K562 (cell line): ENCODE measurements at regions of chr3 and their contacts with region 1.

Region 1: GRCh38 chr3:170811928-170812591 is 57.9 kb downstream of the RPL22L1 start:
- DNase-seq: peak; percentile 83 to 90 (median 87)
- ATAC-seq: peak; percentile 83
- H3K4me3 ChIP-seq: no peak overlapping the region
- H3K27ac ChIP-seq: no peak overlapping the region
- H3K4me1 ChIP-seq: peaks cover 21 to 48% of the 10 kb centered on the region in 2 experiments
- H3K27me3 ChIP-seq: no peaks in the 10 kb centered on the region
- CTCF ChIP-seq: peak; percentile 91 to 99 (median 98)
- EP300 ChIP-seq: peak; percentile 41; the same call in 1 of the 2 replicates
- POLR2A ChIP-seq: no peak
- RAD21 ChIP-seq: peak; percentile 97 to 98

Region 2: GRCh38 chr3:170180908-170181879 is 630.9 kb before region 1 on chr3 and contains the start of gene PHC3:
- CTCF ChIA-PET with region 1: no interaction called
- POLR2A ChIA-PET with region 1: no interaction called
- in situ Hi-C with region 1: no loop called
- intact Hi-C with region 1: loop called (anchors 10 kb)
- DNase-seq: peak; percentile 96 to 99 (median 98)
- ATAC-seq: peak; percentile 92
- H3K4me3 ChIP-seq: peak within 1 kb of the TSS; percentile 77
- H3K27ac ChIP-seq: peak within 1 kb of the TSS; percentile 91
- H3K4me1 ChIP-seq: peaks cover 4 to 15% of the 10 kb centered on the region in 2 experiments; a peak in 3 of 5 replicates
- H3K27me3 ChIP-seq: no peaks in the 10 kb centered on the region
- CTCF ChIP-seq: no peak
- EP300 ChIP-seq: no peak
- POLR2A ChIP-seq: peak; percentile 94
- RAD21 ChIP-seq: no peak
- polyA plus RNA-seq, gene PHC3: 4.6 to 6.0 TPM

Region 3: DNA sequence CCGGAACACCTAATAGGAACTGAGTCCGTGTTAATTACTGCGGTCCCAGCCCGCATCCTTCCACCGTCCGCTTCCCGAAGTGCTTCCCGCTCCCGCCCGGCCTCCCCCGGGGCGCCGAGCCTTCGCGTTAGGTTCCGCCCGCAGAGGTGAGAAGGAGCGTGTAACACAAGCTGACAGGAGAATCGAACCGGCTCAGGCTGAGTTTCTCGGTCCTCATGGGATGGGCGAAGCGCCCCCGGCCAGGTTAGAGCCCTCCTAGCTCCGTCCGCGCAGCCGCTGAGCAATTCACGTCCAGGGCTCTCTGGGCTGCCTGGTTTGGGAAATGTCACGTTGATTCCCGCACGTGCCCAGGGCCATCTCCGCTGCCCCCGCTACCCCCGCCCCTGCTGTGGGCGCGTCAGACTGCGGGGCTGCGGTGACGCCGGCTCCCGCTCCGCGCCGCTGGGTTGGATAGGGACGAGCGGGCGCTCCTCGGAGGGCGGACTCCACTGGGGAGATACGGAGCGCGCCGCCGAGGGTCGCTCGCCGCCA is 392.4 kb before region 1 on chr3:
- CTCF ChIA-PET with region 1: interaction called, 13 read pairs
- POLR2A ChIA-PET with region 1: interaction called, 5 read pairs
- in situ Hi-C with region 1: loop called (anchors 5 kb)
- intact Hi-C with region 1: loop called (anchors 1 kb)
- DNase-seq: no peak
- ATAC-seq: no peak
- H3K4me3 ChIP-seq: no peak overlapping the region
- H3K27ac ChIP-seq: no peak overlapping the region
- H3K4me1 ChIP-seq: peaks cover 0 to 12% of the 10 kb centered on the region in 2 experiments; a peak in 2 of 5 replicates
- H3K27me3 ChIP-seq: no peaks in the 10 kb centered on the region
- CTCF ChIP-seq: no peak
- EP300 ChIP-seq: no peak
- POLR2A ChIP-seq: no peak
- RAD21 ChIP-seq: no peak

Region 4: GRCh38 chr3:170622369-170623159 is 189.5 kb before region 1 on chr3:
- CTCF ChIA-PET with region 1: no interaction called
- POLR2A ChIA-PET with region 1: no interaction called
- in situ Hi-C with region 1: no loop called
- intact Hi-C with region 1: loop called (anchors 5 kb)
- DNase-seq: peak; percentile 20 to 68 (median 44)
- ATAC-seq: peak; percentile 96
- H3K4me3 ChIP-seq: no peak overlapping the region
- H3K27ac ChIP-seq: no peak overlapping the region
- H3K4me1 ChIP-seq: peaks cover 4 to 8% of the 10 kb centered on the region in 2 experiments; a peak in 3 of 5 replicates
- H3K27me3 ChIP-seq: no peaks in the 10 kb centered on the region
- CTCF ChIP-seq: no peak
- EP300 ChIP-seq: no peak
- POLR2A ChIP-seq: no peak
- RAD21 ChIP-seq: no peak

Region 5: GRCh38 chr3:170717410-170718402 is 94.4 kb before region 1 on chr3:
- CTCF ChIA-PET with region 1: no interaction called
- POLR2A ChIA-PET with region 1: no interaction called
- in situ Hi-C with region 1: loop called (anchors 5 kb)
- intact Hi-C with region 1: no loop called
- DNase-seq: peak; percentile 46 to 73 (median 58)
- ATAC-seq: peak; percentile 85
- H3K4me3 ChIP-seq: no peak overlapping the region
- H3K27ac ChIP-seq: peak overlapping the region; percentile 50
- H3K4me1 ChIP-seq: peaks cover 6 to 19% of the 10 kb centered on the region in 2 experiments; a peak in 4 of 5 replicates
- H3K27me3 ChIP-seq: no peaks in the 10 kb centered on the region
- CTCF ChIP-seq: no peak
- EP300 ChIP-seq: 0 out of 2 replicates have a peak, but pooled peaks have one; percentile 3
- POLR2A ChIP-seq: no peak
- RAD21 ChIP-seq: peak in 1 of 2 experiments; percentile 3; a peak in 1 of 4 replicates

Region 6: GRCh38 chr3:170778240-170779217 is 33.5 kb before region 1 on chr3:
- CTCF ChIA-PET with region 1: no interaction called
- POLR2A ChIA-PET with region 1: no interaction called
- in situ Hi-C with region 1: no loop called
- intact Hi-C with region 1: loop called (anchors 1 kb)
- DNase-seq: peak; percentile 30 to 93 (median 58)
- ATAC-seq: peak; percentile 86
- H3K4me3 ChIP-seq: no peak overlapping the region
- H3K27ac ChIP-seq: peak overlapping the region; percentile 70
- H3K4me1 ChIP-seq: peaks cover 12 to 61% of the 10 kb centered on the region in 2 experiments
- H3K27me3 ChIP-seq: no peaks in the 10 kb centered on the region
- CTCF ChIP-seq: no peak
- EP300 ChIP-seq: peak; percentile 99
- POLR2A ChIP-seq: no peak
- RAD21 ChIP-seq: peak in 1 of 2 experiments; percentile 40; a peak in 3 of 4 replicates

Region 7: GRCh38 chr3:171068658-171069057 is 256.6 kb after region 1 on chr3:
- CTCF ChIA-PET with region 1: no interaction called
- POLR2A ChIA-PET with region 1: no interaction called
- in situ Hi-C with region 1: no loop called
- intact Hi-C with region 1: no loop called
- DNase-seq: no peak
- ATAC-seq: no peak
- H3K4me3 ChIP-seq: no peak overlapping the region
- H3K27ac ChIP-seq: no peak overlapping the region
- H3K4me1 ChIP-seq: no peaks in the 10 kb centered on the region
- H3K27me3 ChIP-seq: no peaks in the 10 kb centered on the region
- CTCF ChIP-seq: no peak
- EP300 ChIP-seq: no peak
- POLR2A ChIP-seq: no peak
- RAD21 ChIP-seq: no peak